HEK293T (cell line): ENCODE measurements at regions of chr4 and their contacts with region 1.

Region 1: GRCh38 chr4:165096776-165097175 is 15.9 kb downstream of the TMEM192 start:
- DNase-seq: peak; percentile 26

Region 2: GRCh38 chr4:164768516-164768915 is 328.3 kb before region 1 on chr4:
- CTCF ChIA-PET with region 1: interaction called, 14 read pairs
- POLR2A ChIA-PET with region 1: no interaction called
- DNase-seq: peak; percentile 9

Region 3: DNA sequence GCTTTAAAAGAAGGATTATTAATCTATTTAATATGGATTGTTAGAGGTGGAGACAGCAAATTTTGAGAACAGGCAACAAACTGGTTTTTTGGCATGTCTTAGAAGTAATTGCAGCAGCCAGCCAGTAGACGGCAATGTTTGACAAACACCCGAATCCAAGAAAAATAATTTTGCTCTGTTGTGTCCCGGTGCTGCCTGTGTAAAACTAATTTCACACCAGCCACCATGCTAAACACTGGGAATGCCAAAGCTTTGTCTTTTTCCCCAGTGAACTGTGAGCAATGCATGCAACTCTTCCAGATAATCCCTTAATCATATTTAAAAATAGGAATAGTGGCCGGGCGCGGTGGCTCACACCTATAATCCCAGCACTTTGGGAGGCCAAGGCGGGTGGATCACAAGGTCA is 317.0 kb before region 1 on chr4:
- CTCF ChIA-PET with region 1: interaction called, 10 read pairs
- POLR2A ChIA-PET with region 1: no interaction called
- DNase-seq: peak; percentile 51

Region 4: GRCh38 chr4:164918956-164919355 is 177.8 kb before region 1 on chr4:
- CTCF ChIA-PET with region 1: no interaction called
- POLR2A ChIA-PET with region 1: no interaction called
- DNase-seq: no peak

Region 5: DNA sequence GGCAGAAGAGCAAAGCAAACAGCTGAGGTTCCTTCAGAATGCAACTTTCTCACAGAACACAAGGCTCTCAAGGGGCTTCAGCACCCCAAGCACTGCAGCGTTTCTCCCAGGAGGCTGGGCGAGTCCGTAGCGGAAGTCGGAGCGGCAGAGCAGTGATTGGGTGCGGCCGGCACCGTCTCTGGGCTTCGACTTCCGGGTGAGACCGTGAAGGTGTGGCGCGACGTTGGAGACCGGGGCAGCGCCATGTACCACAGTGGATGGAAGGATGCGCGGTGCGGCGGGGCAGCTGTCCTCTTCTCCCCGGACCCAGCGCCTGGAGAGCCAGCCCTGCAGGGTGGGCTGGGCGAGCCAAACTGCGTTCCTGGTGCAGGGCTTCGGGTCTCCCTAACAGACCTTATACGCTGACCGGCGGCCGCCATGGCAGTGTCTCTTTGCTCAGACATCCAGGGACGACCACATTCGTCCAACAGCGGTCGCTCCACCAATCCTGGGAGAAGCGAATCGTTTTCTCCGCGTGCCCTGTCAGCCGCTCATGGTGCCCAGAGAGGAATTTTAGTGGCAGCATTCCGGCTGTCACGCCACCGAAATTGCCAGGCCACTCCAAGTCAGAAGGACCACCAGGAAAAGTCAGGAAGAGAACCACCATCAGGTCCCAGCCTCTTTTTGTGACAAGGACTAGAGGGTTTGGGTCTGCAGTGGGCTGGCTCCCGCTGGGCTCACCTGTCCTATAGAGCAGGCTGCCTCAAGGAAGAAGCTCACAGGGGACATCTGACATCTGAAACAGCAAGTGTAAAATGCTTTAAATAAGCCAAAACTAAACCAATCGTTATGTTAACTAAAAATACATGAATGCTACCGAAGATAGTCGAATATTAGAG is 139.8 kb before region 1 on chr4:
- CTCF ChIA-PET with region 1: no interaction called
- POLR2A ChIA-PET with region 1: no interaction called
- DNase-seq: no peak

Region 6: DNA sequence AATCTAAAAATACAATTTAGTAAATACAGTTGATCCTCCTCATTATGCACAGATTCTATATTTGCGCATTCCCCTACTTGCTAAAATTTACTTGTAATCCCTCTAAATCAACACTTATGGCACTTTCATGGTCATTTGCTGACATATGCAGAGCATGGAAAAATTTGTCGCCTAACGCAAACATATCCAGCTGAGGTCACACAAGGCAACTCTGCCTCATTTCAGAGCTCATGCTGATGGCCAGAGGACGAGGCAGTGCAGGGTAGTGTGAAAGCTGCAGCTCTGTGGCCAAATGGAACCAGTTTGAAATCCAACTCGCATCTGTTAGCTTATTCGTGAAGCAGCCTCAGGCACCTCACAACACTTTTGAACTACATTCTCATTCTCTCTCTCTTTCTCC is 70.9 kb after region 1 on chr4:
- CTCF ChIA-PET with region 1: no interaction called
- POLR2A ChIA-PET with region 1: no interaction called
- DNase-seq: no peak